ENCODE measurements at regions of chr7 and their contacts with region 1.

Region 1: GRCh38 chr7:100719523-100720319 is 547 bp upstream of the EPO start:
- DNase-seq: peak; percentile 28
- H3K4me3 ChIP-seq: peak overlapping the region in 1 of 3 experiments; percentile 31
- H3K27ac ChIP-seq: no peak overlapping the region
- H3K4me1 ChIP-seq: peaks cover 3% of the 10 kb centered on the region
- H3K27me3 ChIP-seq: peaks cover 19% of the 10 kb centered on the region
- CTCF ChIP-seq: peak; percentile 32 to 76

Region 2: GRCh38 chr7:100764841-100765240 is 45.1 kb after region 1 on chr7:
- CTCF ChIA-PET with region 1: no interaction called
- dilution Hi-C with region 1: loop called (anchors 5 kb)
- in situ Hi-C with region 1: no loop called
- intact Hi-C with region 1: no loop called
- DNase-seq: no peak
- H3K4me3 ChIP-seq: no peak overlapping the region
- H3K27ac ChIP-seq: no peak overlapping the region
- H3K4me1 ChIP-seq: no peaks in the 10 kb centered on the region
- H3K27me3 ChIP-seq: no peaks in the 10 kb centered on the region
- CTCF ChIP-seq: no peak

Region 3: DNA sequence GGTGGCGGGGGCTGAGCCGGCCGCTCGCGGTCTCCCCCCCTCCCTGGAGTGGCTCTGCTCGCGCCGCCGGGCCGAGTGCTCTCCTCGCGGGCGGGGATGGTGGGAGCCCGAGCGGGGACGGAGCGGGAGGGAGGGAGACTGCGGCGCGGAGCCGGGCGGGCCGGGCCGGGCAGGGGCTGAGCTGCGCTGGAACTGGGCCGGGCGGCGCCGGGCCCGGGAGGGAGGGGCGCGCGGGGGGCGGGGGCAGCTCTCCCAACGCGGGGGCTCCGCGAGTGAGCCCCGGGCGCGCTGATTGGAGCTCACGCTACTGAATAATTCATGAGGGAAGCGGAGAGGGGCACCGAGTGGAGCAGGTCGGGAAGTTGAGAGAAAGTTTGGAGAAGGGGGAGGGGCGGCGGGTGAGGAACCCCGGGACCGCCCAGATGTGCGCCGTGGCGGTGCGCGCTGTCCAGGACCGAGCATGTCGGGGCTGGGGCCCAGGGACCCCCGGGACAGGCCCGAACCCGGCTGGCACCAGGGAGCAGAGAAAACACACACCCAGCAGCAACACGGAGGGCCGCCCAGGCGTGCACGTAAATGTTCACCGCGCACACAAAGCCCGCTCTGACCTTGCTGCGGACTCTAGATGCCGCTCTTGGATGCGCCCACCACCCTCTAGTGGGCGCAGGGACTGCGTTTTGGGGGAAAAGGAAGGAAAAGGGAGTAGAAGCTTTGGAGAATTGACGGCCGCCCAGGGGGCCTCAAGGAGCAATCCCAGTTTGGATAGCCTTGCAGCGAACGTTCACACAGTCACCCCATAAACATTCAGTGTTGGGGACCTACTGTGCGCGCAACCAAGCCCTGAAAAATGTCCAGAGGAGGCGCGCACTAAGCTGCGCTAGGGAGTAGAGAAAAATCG is 107.9 kb after region 1 on chr7 and contains the start of gene EPHB4:
- CTCF ChIA-PET with region 1: no interaction called
- dilution Hi-C with region 1: no loop called
- in situ Hi-C with region 1: no loop called
- intact Hi-C with region 1: loop called (anchors 1 kb)
- DNase-seq: peak; percentile 79
- H3K4me3 ChIP-seq: peak within 1 kb of the TSS; percentile 70 to 86 (median 72)
- H3K27ac ChIP-seq: peak within 1 kb of the TSS; percentile 39
- H3K4me1 ChIP-seq: peaks cover 7% of the 10 kb centered on the region
- H3K27me3 ChIP-seq: no peaks in the 10 kb centered on the region
- CTCF ChIP-seq: no peak
- total RNA-seq, gene EPHB4: 75.0 to 81.0 TPM